ENCODE measurements at regions of chr2 and their contacts with region 1.

Region 1: DNA sequence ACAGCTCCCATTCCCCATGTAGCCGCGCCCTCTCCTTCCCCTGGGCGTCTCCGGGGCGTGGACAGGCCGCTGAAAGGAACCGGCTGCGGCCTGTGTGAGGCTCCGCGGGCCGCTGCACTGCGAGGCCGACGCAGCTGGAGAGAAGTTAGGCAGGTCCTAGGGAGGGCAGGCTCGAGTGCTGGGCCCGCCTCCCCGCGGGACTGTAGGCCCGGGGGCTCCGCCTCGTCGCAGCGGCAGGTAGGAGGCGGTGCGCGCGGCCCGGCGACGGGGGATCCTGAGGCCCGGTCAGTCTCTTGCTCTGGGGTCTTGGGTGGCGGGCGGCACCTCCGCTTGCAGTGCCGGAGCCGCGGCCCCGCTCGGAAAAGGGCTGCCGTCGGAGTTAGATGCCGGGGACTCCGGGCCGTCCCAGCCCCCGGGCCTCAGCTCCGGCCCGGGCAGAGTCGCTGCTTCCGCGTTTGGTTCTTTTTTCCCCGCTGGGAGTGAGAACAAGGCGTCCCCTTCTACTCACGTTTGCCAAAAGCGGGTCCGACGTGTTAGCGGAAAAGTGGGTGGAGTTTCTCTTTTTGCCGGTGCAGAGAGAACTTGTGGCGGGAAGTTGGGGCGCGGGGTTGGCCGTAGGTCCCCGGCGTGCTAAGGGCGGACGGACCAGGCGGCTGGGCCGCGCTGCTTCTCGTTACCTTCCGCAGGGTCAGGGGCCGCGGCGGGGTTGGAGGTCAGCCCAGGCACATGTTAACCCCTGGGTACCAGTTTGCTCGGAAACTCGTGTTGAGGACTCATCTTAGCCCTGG is at the start of gene VRK2:
- DNase-seq: peak; percentile 84
- H3K4me3 Mint-ChIP-seq: peak within 1 kb of the TSS; percentile 83
- H3K27ac Mint-ChIP-seq: peak within 1 kb of the TSS; percentile 91
- H3K4me1 Mint-ChIP-seq: peaks cover 32% of the 10 kb centered on the region
- H3K27me3 Mint-ChIP-seq: no peaks in the 10 kb centered on the region
- total RNA-seq, gene VRK2: 20.5 and 22.4 TPM in 2 replicates

Region 2: DNA sequence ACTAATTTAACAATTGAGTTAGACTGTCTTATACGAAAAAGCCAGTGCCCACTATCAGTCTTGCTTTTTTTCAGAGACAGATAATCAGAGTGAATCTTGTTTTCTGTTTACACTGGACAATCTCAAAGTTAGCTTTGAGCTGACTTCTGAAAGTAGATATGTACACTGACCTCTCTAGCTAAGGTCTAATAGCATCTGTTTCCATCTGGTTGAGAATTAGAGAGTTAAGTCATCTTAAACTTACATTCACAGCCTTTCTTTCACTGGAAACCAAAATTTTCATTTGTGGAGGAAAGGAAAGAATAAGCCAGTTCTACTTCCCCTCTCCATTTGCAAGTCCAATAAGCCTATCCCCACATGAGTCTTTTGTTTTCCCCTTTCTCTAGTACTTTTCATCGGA is 89.1 kb after region 1 on chr2:
- intact Hi-C with region 1: no loop called
- DNase-seq: no peak
- H3K4me3 Mint-ChIP-seq: no peak overlapping the region
- H3K27ac Mint-ChIP-seq: no peak overlapping the region
- H3K4me1 Mint-ChIP-seq: no peaks in the 10 kb centered on the region
- H3K27me3 Mint-ChIP-seq: no peaks in the 10 kb centered on the region

Region 3: DNA sequence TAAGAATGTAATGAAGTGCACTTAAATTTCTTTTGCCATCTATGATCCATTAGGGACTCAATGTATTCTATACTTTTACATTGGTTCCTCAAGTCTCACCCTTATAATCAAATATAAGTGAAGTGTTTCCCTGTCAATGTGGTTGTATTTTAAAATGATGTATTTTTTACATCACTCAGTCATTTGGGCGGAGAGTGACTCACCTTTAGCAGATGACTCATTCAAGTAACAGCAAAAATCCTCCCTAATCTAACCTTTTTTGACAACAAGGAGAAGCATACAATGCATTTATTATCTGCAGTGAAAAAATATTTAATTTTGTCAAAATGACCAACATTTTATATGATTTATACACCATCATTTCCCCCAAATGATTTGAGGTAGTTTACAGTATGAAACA is 99.9 kb after region 1 on chr2:
- intact Hi-C with region 1: loop called (anchors 2 kb)
- DNase-seq: no peak
- H3K4me3 Mint-ChIP-seq: no peak overlapping the region
- H3K27ac Mint-ChIP-seq: no peak overlapping the region
- H3K4me1 Mint-ChIP-seq: peaks cover 5% of the 10 kb centered on the region
- H3K27me3 Mint-ChIP-seq: no peaks in the 10 kb centered on the region

Region 4: DNA sequence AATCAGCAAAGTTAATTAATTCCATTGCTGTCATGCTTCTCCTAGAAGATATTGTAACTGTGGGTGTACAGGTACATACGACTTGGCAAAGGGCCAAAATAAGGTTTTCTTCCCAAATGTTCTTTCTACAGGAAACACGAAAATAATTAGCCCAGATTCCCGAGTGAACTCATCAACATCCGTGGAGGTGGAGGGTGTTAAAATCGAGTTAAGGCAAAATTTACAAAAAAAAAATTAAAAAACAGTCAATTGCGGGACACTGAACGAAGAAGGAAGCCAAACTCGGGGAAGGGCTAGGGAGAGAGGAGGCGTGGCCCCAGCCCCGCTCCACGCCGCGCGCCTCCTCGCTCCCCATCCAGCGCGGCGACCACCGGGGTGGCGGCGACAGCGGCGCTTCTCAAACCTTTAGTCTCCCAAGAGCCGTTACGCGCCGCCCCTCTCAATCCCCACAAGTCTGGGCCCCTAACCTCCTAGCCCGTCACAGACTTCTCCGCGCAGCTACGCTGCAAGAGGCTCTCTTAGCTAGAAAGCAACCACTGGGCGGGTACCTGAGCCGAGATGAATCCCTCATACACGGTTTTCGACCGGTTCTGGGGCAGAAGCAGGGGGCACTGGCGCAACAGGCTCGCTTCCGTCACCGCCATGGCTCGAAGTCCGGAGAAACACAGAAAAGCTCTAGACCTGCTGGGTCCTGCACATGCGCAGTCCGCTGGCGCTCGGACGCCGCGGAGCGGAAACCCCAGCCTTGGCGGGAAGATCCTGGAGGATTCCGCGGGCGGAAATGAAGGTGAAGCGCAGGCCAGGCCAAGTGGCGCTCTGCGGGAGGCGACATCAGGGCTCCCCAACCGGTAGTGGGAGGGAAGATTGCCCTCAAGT is 194.1 kb after region 1 on chr2 and contains the start of gene FANCL:
- intact Hi-C with region 1: loop called (anchors 2 kb)
- DNase-seq: peak; percentile 66
- H3K4me3 Mint-ChIP-seq: peak within 1 kb of the TSS; percentile 89
- H3K27ac Mint-ChIP-seq: peak within 1 kb of the TSS; percentile 87
- H3K4me1 Mint-ChIP-seq: peaks cover 26% of the 10 kb centered on the region
- H3K27me3 Mint-ChIP-seq: peaks cover 15% of the 10 kb centered on the region
- total RNA-seq, gene FANCL: 24.0 and 27.6 TPM in 2 replicates

Region 5: GRCh38 chr2:58350484-58350883 is 303.7 kb after region 1 on chr2:
- intact Hi-C with region 1: loop called (anchors 10 kb)
- DNase-seq: no peak
- H3K4me3 Mint-ChIP-seq: no peak overlapping the region
- H3K27ac Mint-ChIP-seq: no peak overlapping the region
- H3K4me1 Mint-ChIP-seq: peaks cover 9% of the 10 kb centered on the region
- H3K27me3 Mint-ChIP-seq: peaks cover 55% of the 10 kb centered on the region